ENCODE measurements at regions of chr5 and their contacts with region 1.

Region 1: DNA sequence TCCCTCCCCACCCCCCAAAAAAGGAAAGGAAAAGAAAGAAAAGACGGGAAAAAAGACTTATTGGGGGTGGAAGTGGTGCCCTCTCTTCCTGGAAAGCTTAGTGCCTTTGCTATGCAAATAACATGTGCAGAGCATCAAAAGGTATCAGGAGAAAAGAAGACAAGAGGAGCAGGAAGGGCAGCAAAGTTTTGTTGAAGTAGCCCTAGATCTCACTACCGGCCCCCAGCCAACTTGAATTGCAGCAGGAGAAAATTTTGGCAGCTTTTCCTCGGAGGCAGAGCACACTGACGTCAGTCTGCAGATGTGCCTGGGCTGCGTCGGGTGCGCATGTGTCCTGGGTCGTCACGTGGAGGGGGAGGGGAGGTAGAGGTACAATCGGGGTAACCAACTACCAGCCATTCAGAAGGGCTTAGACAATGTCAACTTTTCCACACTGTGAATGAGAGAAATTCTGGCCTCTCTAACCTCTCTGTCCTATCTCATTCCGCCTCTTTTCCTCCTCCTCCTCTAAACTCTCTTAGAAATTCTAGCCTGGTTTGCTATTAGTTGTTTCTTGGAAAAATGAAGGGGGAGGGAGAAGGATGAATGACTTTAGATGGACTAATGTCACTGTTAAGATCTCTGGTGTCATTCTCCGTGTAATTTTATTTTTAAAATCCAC is at the start of gene ADAMTS6:
- DNase-seq: peak; percentile 95 to 96
- H3K4me3 ChIP-seq: peak within 1 kb of the TSS; percentile 58 to 67
- H3K27ac ChIP-seq: peak within 1 kb of the TSS; percentile 84
- H3K4me1 ChIP-seq: peaks cover 0 to 22% (median 2%) of the 10 kb centered on the region in 4 donors
- H3K27me3 ChIP-seq: no peaks in the 10 kb centered on the region
- CTCF ChIP-seq: no peak

Region 2: DNA sequence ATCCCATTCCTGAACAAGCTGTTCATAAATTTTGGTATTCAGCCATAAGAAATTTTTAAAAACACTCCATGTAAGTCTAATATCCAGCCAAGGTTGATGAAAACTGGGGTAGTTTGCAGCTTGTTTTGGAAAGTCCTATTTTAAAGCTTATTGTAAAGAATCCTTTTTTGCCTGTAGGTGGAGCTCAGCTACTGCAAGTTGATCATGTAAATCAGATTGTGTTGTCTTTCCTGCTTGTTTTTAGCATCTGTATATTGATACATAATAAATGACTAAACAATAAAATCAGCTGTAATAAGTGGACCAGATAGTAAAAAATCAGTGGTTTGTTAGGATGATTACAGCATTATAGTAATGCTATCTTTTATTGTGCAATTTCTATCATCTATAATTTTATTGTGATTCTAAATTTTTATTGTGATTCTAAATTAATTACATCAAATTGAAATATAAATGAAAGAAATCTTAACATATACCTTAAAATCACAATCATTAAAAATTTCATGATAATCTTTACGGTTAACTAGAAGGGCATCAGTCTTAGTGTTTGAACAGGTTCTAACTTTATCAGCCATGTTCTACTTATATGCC is 670.6 kb before region 1 on chr5:
- intact Hi-C with region 1: loop called (anchors 5 kb)
- DNase-seq: no peak
- H3K4me3 ChIP-seq: no peak overlapping the region
- H3K27ac ChIP-seq: no peak overlapping the region
- H3K4me1 ChIP-seq: peaks cover 0 to 7% (median 0%) of the 10 kb centered on the region in 4 donors
- H3K27me3 ChIP-seq: no peaks in the 10 kb centered on the region
- CTCF ChIP-seq: peak; percentile 63 to 65

Region 3: GRCh38 chr5:64965613-64966012 is 516.2 kb before region 1 on chr5:
- intact Hi-C with region 1: loop called (anchors 5 kb)
- DNase-seq: no peak
- H3K4me3 ChIP-seq: no peak overlapping the region
- H3K27ac ChIP-seq: no peak overlapping the region
- H3K4me1 ChIP-seq: no peaks in the 10 kb centered on the region
- H3K27me3 ChIP-seq: no peaks in the 10 kb centered on the region
- CTCF ChIP-seq: no peak

Region 4: DNA sequence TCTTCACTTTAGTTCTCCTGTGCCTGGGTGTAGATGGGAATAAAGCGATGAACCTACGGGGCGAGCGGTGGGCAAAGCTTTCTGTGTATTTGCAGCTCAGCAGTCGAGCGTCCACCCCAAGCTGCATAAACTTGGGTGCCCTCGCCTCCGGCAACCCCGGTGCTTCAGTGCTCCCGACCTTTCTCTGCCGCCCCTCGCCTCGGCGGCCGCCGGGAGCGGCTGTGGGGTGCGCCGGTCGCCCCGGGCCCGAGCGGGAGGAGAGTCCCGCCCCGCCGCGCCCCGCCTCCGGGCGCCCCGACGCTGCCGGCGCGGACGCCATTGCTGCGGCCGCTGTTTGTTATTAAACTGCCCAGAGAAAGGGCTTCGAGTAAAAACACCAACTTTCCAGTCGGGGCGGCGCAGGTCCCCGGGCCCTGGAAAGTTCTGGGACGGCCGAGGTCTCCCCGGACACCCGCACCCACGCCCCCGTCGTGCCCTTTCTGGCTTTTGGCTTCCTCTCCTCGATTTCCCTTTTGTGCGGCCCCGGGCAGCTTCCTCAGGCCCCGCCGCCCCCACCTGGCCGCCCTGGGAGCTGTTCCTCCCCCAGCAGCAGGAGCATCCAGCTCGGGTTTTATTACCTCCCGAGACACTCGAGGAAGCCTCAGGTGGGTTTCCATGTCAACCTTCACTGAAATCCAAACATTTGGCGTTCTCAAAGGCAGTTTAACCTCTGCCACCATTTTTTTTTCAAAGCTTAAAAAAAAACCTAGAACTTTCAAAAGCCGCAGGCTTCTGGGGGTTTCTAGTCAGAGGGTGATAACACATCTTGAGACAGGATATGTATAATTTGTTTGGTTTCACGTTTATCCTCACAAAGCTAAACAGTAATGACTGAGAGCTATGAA is 378.7 kb before region 1 on chr5:
- intact Hi-C with region 1: loop called (anchors 1 kb)
- DNase-seq: peak; percentile 54 to 78
- H3K4me3 ChIP-seq: peak overlapping the region; percentile 62 to 74
- H3K27ac ChIP-seq: peak overlapping the region; percentile 84 to 89
- H3K4me1 ChIP-seq: peaks cover 0 to 23% (median 7%) of the 10 kb centered on the region in 4 donors
- H3K27me3 ChIP-seq: no peaks in the 10 kb centered on the region
- CTCF ChIP-seq: peak; percentile 23 to 42

Region 5: DNA sequence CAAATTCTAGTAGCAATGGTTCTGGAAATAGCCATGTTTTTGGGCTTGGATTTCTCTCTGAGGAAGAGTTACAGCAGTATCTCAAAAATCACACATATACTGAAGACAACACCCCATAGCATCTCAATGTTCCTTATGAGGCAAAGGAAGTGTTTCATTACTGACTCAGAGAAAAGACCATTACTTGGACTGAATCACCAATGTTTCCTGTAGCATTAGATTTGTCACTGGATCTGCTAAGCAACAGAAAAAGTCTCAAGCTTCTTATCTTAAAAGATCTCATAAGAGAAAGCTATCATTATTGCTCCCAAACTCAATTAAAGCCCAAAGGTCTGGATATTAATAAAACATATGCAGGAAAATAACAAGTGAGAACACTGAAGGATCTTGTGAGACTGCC is 272.4 kb before region 1 on chr5:
- intact Hi-C with region 1: loop called (anchors 10 kb)
- DNase-seq: no peak
- H3K4me3 ChIP-seq: no peak overlapping the region
- H3K27ac ChIP-seq: no peak overlapping the region
- H3K4me1 ChIP-seq: no peaks in the 10 kb centered on the region
- H3K27me3 ChIP-seq: no peaks in the 10 kb centered on the region
- CTCF ChIP-seq: no peak